OCI-LY7 (cell line): ENCODE measurements at regions of chr7 and their contacts with region 1.

Region 1: DNA sequence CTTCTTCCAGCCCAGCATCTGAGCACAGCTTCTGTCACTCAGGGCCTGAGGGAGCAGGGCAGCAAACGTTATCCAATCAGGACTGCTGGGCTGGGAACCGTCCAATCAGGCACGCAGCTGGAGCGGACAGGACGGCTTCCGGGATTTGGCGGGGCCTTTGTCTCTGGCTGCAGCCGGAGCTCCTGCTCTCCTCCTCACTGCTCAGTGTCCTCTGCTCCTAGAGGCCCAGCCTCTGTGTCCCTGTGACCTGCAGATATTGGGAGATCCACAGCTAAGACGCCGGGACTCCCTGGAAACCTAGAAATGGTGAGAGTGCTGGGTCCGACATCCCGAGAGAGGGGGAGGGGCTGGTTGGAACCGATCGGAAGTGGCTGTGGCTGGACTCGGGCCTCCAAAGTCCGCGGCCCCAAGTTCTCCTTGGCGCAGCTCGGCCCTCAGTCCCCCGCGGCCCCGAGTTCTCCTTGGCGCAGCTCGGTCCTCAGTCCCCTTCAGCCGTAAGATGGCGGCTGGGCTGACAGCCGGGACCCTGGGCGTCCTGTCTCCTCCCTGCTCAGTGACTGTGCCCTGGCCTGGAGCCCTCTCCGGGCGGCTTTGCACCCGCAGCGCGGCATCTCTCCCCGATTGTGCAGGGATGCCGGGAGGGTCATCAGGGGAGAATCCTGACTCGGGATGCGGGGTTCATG is at the start of gene ZNF107:
- DNase-seq: peak; percentile 95
- H3K4me3 ChIP-seq: peak within 1 kb of the TSS; percentile 93
- H3K27ac ChIP-seq: peak within 1 kb of the TSS; percentile 89
- H3K4me1 ChIP-seq: peaks cover 30% of the 10 kb centered on the region
- CTCF ChIP-seq: no peak
- total RNA-seq, gene ZNF107: 63.3 and 68.9 TPM in 2 replicates

Region 2: GRCh38 chr7:64653721-64654401 is 12.3 kb before region 1 on chr7:
- CTCF ChIA-PET with region 1: no interaction called
- POLR2A ChIA-PET with region 1: interaction called, 10 read pairs
- intact Hi-C with region 1: no loop called
- DNase-seq: no peak
- H3K4me3 ChIP-seq: no peak overlapping the region
- H3K27ac ChIP-seq: no peak overlapping the region
- H3K4me1 ChIP-seq: no peaks in the 10 kb centered on the region
- CTCF ChIP-seq: no peak

Region 3: DNA sequence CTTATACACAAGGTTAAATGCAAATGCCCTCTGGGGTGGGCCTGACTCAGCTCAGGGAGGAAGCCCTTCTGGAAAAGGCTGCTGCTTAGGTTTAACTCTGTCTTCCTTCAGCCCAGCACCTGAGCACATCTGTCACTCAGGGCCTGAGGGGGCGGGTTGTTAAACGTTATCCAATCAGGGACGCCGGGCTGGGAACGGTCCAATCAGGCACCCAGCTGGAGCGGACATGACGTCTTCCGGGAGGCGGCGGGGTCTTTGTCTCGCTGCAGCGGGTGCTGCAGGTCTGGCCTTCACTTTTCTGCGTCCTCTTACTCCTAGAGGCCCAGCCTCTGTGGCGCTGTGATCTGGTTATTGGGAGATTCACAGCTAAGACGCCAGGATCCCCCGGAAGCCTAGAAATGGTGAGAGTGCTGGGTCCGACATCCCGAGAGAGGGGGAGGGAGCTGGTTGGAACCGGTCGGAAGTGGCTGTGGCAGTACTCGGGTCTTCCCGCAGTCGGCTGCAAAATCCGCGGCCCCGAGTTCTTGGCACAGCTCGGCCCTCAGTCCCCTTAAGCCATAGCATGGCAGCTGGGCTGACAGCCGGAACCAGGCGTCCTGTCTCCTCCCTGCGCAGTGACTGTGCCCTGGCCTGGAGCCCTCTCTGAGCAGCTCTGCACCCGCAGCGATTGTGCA is 128.2 kb after region 1 on chr7 and contains the start of gene ZNF138:
- CTCF ChIA-PET with region 1: no interaction called
- POLR2A ChIA-PET with region 1: interaction called, 4 read pairs
- intact Hi-C with region 1: loop called (anchors 5 kb)
- DNase-seq: peak; percentile 98
- H3K4me3 ChIP-seq: peak within 1 kb of the TSS; percentile 99
- H3K27ac ChIP-seq: peak within 1 kb of the TSS; percentile 85
- H3K4me1 ChIP-seq: peaks cover 29% of the 10 kb centered on the region
- CTCF ChIP-seq: no peak
- total RNA-seq, gene ZNF138: 24.4 and 25.6 TPM in 2 replicates